ENCODE measurements at regions of chr2 and their contacts with region 1.

Region 1: GRCh38 chr2:150472511-150472899 is 15.0 kb downstream of the RND3 start:
- DNase-seq: peak; percentile 40 to 82 (median 67)
- H3K4me3 ChIP-seq: no peak overlapping the region
- H3K27ac ChIP-seq: peak overlapping the region in 2 of 5 donors; percentile 63 to 79
- H3K4me1 ChIP-seq: peaks cover 7 to 55% of the 10 kb centered on the region in 2 donors
- H3K27me3 ChIP-seq: no peaks in the 10 kb centered on the region
- CTCF ChIP-seq: no peak
- POLR2A ChIP-seq: no peak

Region 2: DNA sequence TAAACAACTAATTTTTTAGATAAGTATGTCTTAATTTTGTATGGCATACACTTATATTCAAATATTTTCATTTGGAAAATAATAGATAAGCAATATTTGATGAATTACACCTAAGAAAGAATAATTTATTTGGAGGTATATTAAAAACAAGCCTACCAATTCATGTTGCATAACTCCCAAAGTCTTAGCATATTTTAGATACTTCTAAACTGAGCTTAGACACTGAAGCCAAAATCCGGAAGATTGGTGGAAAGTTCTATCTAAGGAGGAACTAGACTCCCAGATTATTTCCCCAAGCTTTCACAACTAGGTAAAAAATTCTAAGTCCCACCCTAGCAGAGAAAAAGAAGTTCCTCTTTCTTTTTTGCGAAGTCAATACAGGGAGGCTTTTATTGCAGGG is 663.9 kb before region 1 on chr2:
- intact Hi-C with region 1: loop called in 1 of 2 experiments (anchors 10 kb)
- DNase-seq: no peak
- H3K4me3 ChIP-seq: no peak overlapping the region
- H3K27ac ChIP-seq: no peak overlapping the region
- H3K4me1 ChIP-seq: no peaks in the 10 kb centered on the region
- H3K27me3 ChIP-seq: no peaks in the 10 kb centered on the region
- CTCF ChIP-seq: no peak
- POLR2A ChIP-seq: no peak

Region 3: DNA sequence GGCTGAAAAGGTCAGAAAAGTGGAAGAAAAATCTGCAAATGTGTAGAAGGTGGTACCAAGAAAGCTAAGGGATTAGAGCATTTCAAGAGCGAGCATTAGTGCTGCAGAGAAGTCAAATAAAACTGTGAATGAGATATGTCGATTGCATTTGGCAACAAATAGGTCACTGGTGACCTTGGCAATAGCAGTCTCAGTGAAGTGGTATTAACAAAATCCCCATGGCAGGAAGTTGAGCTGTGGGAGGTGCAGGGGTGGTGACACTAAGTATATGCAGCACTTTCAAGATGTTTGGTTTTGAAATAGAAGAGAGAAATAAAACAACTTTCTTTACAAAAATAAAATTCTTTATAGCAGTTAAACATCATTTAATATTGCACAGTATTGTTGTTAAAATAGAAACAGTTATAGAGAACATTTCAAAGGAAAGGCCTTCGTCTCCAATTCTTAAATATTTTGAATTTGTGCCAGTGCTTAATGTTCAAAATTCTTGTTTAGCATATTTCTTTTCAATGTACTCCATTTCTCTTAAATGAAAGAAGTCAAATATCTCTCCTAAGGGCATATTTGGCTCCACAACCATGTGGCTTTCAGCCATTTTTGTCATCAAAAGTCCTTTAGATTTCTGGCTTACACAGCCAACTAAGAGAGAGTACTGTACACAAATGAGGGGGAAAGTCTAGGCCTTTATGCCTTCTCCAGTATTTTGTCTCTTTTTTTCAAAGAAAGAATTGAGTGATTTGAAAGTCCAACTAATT is 441.9 kb before region 1 on chr2:
- intact Hi-C with region 1: loop called in 1 of 2 experiments (anchors 10 kb)
- DNase-seq: peak in 1 of 7 donors; percentile 4
- H3K4me3 ChIP-seq: no peak overlapping the region
- H3K27ac ChIP-seq: no peak overlapping the region
- H3K4me1 ChIP-seq: no peaks in the 10 kb centered on the region
- H3K27me3 ChIP-seq: no peaks in the 10 kb centered on the region
- CTCF ChIP-seq: no peak
- POLR2A ChIP-seq: no peak

Region 4: GRCh38 chr2:150228936-150229335 is 243.6 kb before region 1 on chr2:
- intact Hi-C with region 1: no loop called
- DNase-seq: no peak
- H3K4me3 ChIP-seq: no peak overlapping the region
- H3K27ac ChIP-seq: no peak overlapping the region
- H3K4me1 ChIP-seq: no peaks in the 10 kb centered on the region
- H3K27me3 ChIP-seq: no peaks in the 10 kb centered on the region
- CTCF ChIP-seq: no peak
- POLR2A ChIP-seq: no peak

Measured in adrenal gland (tissue), 19 donors.